Right ventricle myocardium inferior (tissue), 1 donor: ENCODE measurements at regions of chr1 and their contacts with region 1.

Region 1: DNA sequence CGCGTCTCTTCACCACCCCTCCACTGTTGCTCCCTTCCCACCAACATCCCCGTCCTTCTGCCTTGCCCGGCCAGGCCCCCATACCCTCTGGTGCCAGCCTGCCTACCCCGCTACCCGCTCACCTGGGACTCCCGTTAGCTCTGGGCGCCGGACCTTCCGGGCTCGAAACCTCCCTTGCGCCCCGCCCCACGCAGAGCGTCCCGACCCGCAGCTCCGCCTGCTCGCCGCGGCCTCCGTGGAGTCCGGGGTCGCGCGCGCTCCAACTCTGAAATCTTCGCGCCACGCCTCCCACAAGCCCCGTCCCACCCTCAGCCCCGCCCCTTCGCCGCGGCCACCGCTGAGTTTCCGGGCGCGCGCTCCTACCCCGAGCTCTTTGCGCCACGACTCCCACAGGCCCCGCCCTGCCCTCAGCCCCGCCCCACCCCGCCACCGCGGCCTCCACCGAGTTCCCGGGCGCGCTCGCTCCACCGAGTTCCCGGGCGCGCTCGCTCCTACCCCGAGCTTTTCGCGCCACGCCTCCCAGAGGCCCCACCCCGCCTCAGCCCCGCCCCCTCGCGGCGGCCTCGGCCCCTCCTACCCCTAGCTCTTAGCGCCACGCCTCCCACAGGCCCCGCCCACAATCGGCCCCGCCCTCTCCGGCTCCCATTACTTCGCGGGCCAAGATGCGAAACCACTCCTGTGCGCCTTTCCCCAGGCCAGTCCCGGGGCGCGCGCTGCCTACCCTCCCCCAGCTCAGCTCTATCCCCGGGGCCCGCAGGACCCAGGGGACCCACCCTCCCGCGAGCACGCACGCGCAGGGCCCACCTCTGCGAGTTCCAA is at the start of gene IFT25:
- DNase-seq: peak; percentile 98
- ATAC-seq: peak; percentile 95
- total RNA-seq, gene IFT25: 11.9 TPM

Region 2: GRCh38 chr1:53837924-53838652 is 107.6 kb before region 1 on chr1 and contains the start of gene NDC1:
- intact Hi-C with region 1: loop called (anchors 5 kb)
- DNase-seq: peak; percentile 94
- ATAC-seq: peak; percentile 98
- total RNA-seq, gene NDC1: 6.4 TPM

Region 3: GRCh38 chr1:53889304-53890298 is 56.0 kb before region 1 on chr1 and contains the start of gene YIPF1:
- intact Hi-C with region 1: loop called (anchors 2 kb)
- DNase-seq: peak; percentile 96
- ATAC-seq: peak; percentile 99
- total RNA-seq, gene YIPF1: 16.1 TPM

Region 4: DNA sequence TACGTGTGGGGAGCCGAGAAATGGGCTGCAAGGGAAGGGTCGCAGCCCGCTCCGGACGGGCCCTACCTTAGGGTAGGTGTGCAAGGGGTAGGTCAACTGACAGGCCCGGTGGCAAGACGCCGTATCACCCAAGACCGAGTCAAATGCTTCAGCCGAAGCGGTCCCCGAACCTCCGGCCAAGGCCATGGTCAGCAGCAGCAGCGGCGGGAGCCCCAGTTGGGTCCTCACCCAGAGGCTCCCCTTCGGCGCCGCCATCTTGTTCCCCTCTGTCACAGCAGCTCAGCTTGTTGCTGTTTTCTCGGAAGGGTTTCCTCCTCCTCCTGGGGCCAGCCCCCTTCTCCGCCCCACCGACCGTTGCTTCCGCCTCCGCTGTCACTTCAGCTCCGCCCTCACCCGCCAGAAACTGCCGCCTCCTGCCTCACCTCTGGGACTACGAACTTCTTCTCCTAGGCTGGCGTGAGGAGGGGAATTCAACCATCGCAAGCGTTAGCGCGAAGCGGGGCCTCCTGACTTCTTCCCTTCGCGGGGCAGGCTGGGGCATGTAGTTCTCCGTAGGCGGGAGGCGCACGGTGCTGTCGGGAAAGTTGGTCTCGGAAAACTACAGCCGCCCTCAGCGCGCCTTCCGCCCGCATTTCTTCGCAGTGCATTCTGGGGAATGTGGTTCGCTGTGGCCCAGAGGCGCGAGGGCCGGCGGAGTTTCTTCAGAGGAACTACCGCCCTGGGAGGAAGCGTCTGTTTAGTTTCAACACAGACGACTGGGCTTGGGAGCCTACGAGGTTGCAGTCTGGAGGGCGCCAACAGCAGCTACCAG is 107.5 kb after region 1 on chr1 and contains the starts of genes TCEANC2 and TMEM59:
- intact Hi-C with region 1: loop called (anchors 5 kb)
- DNase-seq: peak; percentile 99
- ATAC-seq: peak; percentile 99
- total RNA-seq, gene TCEANC2: 4.7 TPM
- total RNA-seq, gene TMEM59: 341 TPM

Region 5: GRCh38 chr1:54764133-54764921 is 818.7 kb after region 1 on chr1 and contains the start of gene PARS2:
- intact Hi-C with region 1: loop called (anchors 10 kb)
- DNase-seq: peak; percentile 98
- ATAC-seq: peak; percentile 100
- total RNA-seq, gene PARS2: 4.2 TPM